Esophagus squamous epithelium (tissue), 5 donors: ENCODE measurements at regions of chr3 and their contacts with region 1.

Region 1: DNA sequence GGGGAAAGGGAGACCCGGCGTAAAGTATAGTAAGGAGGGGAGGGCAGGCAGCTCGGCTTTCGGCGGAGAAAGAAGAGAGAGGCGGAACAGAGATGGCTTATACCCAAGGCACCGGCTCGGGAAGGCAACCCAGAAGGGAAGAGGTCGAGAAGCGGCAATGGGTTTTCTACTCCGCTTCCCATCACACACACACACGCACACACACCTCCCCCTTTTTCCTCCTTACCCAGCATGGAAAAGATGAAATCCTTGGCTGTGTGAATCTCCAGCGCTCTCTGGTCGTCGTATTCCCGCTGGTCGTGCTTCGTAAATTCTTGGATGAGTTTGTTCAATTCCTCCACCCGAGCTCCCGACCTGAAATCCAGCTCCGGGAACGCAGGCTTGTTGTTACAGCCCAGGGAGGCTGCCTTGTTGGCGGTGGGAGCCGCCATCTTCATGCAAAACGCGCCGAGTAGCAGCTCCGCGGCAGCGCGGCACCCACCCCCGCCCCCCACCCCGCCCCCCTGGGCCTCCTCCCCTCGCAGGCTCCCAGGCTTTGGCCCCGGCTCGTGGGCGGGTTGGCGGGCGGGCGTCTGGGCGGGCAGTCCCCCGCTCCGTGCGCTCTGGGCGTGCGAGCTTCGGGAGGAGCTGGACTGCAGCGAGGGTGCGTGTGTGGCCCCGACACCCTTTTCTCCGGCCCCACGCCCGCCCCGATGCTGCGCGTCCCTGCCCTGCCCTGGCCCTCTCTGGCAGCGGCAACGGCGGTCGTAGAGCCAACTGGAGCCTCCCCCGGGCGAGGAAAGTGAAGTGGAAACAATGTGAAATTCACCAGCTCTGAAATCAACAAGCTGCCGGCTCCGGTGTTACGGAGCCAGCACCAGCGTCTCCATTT is at the start of gene MB21D2:
- DNase-seq: no peak
- H3K4me3 ChIP-seq: peak within 1 kb of the TSS; percentile 47 to 92 (median 76)
- H3K27ac ChIP-seq: peak within 1 kb of the TSS; percentile 81 to 95 (median 90)
- H3K4me1 ChIP-seq: peaks cover 4 to 30% (median 13%) of the 10 kb centered on the region in 3 donors
- H3K27me3 ChIP-seq: peaks cover 0 to 9% (median 0%) of the 10 kb centered on the region in 4 donors
- CTCF ChIP-seq: no peak
- POLR2A ChIP-seq: peak in 2 of 4 donors; percentile 32 to 58
- total RNA-seq, gene MB21D2: 0.72 to 3.6 (median 2.8) TPM

Region 2: GRCh38 chr3:192816351-192816750 is 101.3 kb before region 1 on chr3:
- intact Hi-C with region 1: no loop called
- DNase-seq: no peak
- H3K4me3 ChIP-seq: no peak overlapping the region
- H3K27ac ChIP-seq: no peak overlapping the region
- H3K4me1 ChIP-seq: peaks cover 0 to 16% (median 8%) of the 10 kb centered on the region in 3 donors
- H3K27me3 ChIP-seq: no peaks in the 10 kb centered on the region
- CTCF ChIP-seq: peak in 5 of 6 experiments; percentile 55 to 82 (median 66)
- POLR2A ChIP-seq: no peak

Region 3: DNA sequence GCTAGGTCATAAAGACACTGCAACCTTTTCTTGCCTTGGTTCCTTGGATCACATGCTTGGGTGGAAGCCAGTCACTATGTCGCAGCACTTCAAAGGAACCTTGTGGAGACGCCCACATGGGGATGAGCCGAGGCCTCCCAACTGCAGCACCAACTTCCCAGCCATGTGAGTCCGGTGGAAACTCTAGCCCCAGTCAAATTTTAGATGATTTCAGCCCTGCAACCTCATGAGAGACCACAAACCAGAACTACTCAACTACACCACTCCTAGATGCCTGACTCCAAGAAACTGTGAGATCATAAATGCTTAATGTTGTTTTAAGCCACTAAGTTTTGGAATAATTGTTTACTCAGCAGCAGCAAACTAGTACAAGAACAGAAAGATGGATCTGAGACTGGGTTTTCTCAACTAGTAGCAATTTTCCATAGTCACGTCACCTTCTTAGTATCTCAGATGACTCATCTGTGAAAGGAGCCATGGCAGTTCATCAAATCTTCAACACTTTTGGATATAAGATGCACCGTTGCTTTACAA is 86.5 kb before region 1 on chr3:
- intact Hi-C with region 1: loop called (anchors 10 kb)
- DNase-seq: no peak
- H3K4me3 ChIP-seq: no peak overlapping the region
- H3K27ac ChIP-seq: peak overlapping the region in 1 of 4 donors; percentile 16
- H3K4me1 ChIP-seq: peaks cover 6 to 47% (median 9%) of the 10 kb centered on the region in 3 donors
- H3K27me3 ChIP-seq: no peaks in the 10 kb centered on the region
- CTCF ChIP-seq: no peak
- POLR2A ChIP-seq: no peak

Region 4: GRCh38 chr3:192851821-192852424 is 65.7 kb before region 1 on chr3:
- intact Hi-C with region 1: no loop called
- DNase-seq: no peak
- H3K4me3 ChIP-seq: no peak overlapping the region
- H3K27ac ChIP-seq: no peak overlapping the region
- H3K4me1 ChIP-seq: peaks cover 5 to 40% (median 12%) of the 10 kb centered on the region in 3 donors
- H3K27me3 ChIP-seq: no peaks in the 10 kb centered on the region
- CTCF ChIP-seq: no peak
- POLR2A ChIP-seq: no peak

Region 5: GRCh38 chr3:193095366-193095765 is 177.7 kb after region 1 on chr3:
- intact Hi-C with region 1: no loop called
- DNase-seq: no peak
- H3K4me3 ChIP-seq: no peak overlapping the region
- H3K27ac ChIP-seq: no peak overlapping the region
- H3K4me1 ChIP-seq: no peaks in the 10 kb centered on the region
- H3K27me3 ChIP-seq: no peaks in the 10 kb centered on the region
- CTCF ChIP-seq: no peak
- POLR2A ChIP-seq: no peak